A673 (cell line): ENCODE measurements at regions of chr14 and their contacts with region 1.

Region 1: GRCh38 chr14:63632932-63633514 is 8.6 kb downstream of the WDR89 start:
- DNase-seq: peak; percentile 55
- H3K4me3 ChIP-seq: no peak overlapping the region
- H3K27ac ChIP-seq: no peak overlapping the region
- H3K4me1 ChIP-seq: peaks cover 5% of the 10 kb centered on the region
- H3K27me3 ChIP-seq: no peaks in the 10 kb centered on the region
- CTCF ChIP-seq: peak; percentile 74

Region 2: DNA sequence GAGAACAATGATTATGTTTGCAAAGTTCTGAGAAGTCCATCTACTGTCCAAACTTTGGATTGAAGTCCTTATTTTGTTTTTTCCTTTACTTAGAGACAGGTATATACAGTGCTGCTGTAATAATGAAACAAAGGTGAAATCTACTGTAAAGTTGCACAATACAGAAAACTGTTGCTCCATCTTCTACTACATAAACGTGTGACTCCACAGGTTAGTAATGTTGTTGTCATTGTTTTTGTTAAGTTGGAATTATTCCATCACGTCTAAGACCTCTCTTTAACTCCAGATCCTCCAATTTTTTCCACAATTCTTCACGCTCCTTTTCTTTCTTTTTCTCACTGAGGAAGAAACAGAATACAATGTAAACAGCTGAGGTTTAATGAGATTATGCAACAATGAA is 257.3 kb before region 1 on chr14:
- CTCF ChIA-PET with region 1: no interaction called
- POLR2A ChIA-PET with region 1: no interaction called
- intact Hi-C with region 1: no loop called
- DNase-seq: no peak
- H3K4me3 ChIP-seq: no peak overlapping the region
- H3K27ac ChIP-seq: no peak overlapping the region
- H3K4me1 ChIP-seq: no peaks in the 10 kb centered on the region
- H3K27me3 ChIP-seq: no peaks in the 10 kb centered on the region
- CTCF ChIP-seq: no peak

Region 3: GRCh38 chr14:63603749-63604277 is 29.2 kb before region 1 on chr14:
- CTCF ChIA-PET with region 1: interaction called, 11 read pairs
- POLR2A ChIA-PET with region 1: no interaction called
- intact Hi-C with region 1: no loop called
- DNase-seq: no peak
- H3K4me3 ChIP-seq: no peak overlapping the region
- H3K27ac ChIP-seq: no peak overlapping the region
- H3K4me1 ChIP-seq: no peaks in the 10 kb centered on the region
- H3K27me3 ChIP-seq: no peaks in the 10 kb centered on the region
- CTCF ChIP-seq: no peak